Heart right ventricle (tissue), 16 donors: ENCODE measurements at regions of chr7 and their contacts with region 1.

Region 1: GRCh38 chr7:27196287-27196767 is 3.6 kb downstream of the HOXA13 start:
- DNase-seq: peak; percentile 82 to 83
- ATAC-seq: peak in 4 of 8 donors; percentile 54 to 66 (median 58)
- H3K4me3 ChIP-seq: no peak overlapping the region
- H3K27ac ChIP-seq: no peak overlapping the region
- H3K4me1 ChIP-seq: peaks cover 9 to 47% (median 32%) of the 10 kb centered on the region in 9 donors
- H3K27me3 ChIP-seq: peaks cover 55 to 98% (median 97%) of the 10 kb centered on the region in 7 donors
- CTCF ChIP-seq: peak; percentile 37 to 88 (median 83)

Region 2: DNA sequence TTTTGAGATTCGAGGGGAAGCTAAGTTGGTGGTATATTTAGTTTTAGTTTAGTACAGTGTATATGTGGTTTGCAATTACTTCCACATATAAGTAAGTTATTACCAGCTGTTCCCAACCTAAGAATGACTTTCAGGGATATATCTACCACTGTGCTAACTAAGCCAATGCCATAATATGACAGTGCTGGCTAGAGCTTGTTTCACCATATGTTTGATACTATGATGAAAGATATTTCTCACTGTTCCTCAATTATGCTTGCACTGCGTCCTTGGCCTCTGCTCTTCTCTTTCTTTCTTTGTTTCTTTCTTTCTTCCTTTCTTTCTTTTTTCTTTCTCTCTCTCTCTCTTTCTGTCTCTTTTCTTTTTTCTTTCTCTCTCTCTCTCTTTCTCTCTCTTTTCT is 218.2 kb before region 1 on chr7:
- intact Hi-C with region 1: no loop called
- DNase-seq: no peak
- ATAC-seq: no peak
- H3K4me3 ChIP-seq: no peak overlapping the region
- H3K27ac ChIP-seq: no peak overlapping the region
- H3K4me1 ChIP-seq: no peaks in the 10 kb centered on the region
- H3K27me3 ChIP-seq: peaks cover 0 to 30% (median 2%) of the 10 kb centered on the region in 7 donors
- CTCF ChIP-seq: no peak

Region 3: DNA sequence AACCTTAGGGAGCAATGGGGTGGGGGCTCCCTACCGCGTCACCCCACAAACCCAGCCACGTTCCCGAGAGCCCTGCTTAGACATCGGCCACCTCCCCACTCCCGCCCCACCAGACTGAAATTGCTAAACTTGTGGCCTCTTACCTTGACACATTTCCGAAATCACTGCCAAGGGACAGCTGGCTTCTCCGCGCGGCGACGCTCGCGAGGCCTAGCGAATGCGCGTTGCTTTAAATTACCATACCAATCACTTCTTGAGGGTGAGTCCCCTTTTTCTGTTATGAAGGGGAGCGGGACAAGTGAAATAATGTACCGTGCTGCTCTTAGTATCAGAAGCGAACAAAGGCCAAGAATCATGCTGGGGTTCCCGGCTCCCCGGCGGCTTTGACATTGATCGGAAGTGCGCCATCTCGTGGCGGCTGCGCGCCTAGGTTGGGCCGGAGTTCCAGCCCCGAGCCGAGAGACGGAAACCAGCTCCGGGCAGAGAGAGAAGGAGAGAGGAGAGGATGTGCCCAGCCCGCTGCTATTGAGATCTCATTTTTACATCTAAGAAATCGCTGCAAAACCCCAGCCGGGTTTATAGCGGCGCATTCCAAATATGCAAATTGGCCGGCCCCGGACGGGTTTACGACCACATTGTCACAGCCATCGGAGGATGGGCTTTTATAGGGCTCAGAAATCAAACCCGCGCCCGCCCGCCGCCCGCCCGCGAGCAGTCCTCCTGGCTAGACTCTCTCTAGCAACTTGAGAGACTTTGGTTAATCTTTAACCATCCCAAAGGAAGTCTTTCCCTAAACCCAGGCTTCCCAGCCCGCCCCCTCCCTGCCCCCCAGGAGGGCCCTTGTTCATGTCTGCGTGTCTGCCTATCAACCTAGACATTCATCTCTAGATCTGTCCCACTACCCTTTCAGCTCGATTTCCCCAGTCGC is 16.6 kb before region 1 on chr7:
- intact Hi-C with region 1: no loop called
- DNase-seq: peak in 1 of 2 donors; percentile 55
- ATAC-seq: peak in 4 of 8 donors; percentile 61 to 65 (median 63)
- H3K4me3 ChIP-seq: peak overlapping the region in 2 of 10 donors; percentile 5 to 8
- H3K27ac ChIP-seq: no peak overlapping the region
- H3K4me1 ChIP-seq: peaks cover 7 to 32% (median 27%) of the 10 kb centered on the region in 9 donors
- H3K27me3 ChIP-seq: peaks cover 71 to 100% (median 100%) of the 10 kb centered on the region in 7 donors
- CTCF ChIP-seq: peak; percentile 38 to 85 (median 72)

Region 4: DNA sequence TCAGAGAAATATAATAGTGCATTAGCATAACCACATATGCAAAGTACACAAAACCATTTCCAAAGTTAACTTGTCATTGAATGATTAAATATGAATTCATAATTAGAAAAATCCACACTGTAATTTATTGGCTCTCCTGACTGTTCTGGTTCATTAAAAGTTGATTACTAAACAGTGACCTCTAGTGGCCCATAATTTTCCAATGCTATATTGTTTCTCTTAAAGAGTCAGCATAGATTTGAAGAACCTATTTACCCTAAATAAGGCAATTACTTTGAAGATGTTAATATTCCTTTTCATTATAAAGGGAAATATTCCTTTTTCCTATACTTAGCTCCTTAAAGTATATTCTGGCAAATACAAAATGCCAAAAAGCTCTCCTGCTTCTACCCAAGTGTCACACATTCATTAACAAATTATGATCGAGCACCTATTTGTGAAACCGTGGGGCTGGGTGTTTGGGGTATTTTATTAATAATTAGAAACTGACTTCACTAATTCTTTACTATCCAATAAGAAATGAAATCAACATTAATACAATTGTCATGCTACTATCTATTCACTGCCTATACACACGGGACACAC is 380.1 kb after region 1 on chr7:
- intact Hi-C with region 1: loop called in 5 of 10 experiments (anchors 5 to 10 kb)
- DNase-seq: no peak
- ATAC-seq: peak in 1 of 8 donors; percentile 65
- H3K4me3 ChIP-seq: no peak overlapping the region
- H3K27ac ChIP-seq: no peak overlapping the region
- H3K4me1 ChIP-seq: no peaks in the 10 kb centered on the region
- H3K27me3 ChIP-seq: no peaks in the 10 kb centered on the region
- CTCF ChIP-seq: peak; percentile 22 to 80 (median 70)

Region 5: GRCh38 chr7:27774717-27775328 is 578.5 kb after region 1 on chr7:
- intact Hi-C with region 1: loop called in 4 of 10 experiments (anchors 10 kb)
- DNase-seq: no peak
- ATAC-seq: no peak
- H3K4me3 ChIP-seq: no peak overlapping the region
- H3K27ac ChIP-seq: no peak overlapping the region
- H3K4me1 ChIP-seq: peaks cover 0 to 27% (median 0%) of the 10 kb centered on the region in 9 donors
- H3K27me3 ChIP-seq: no peaks in the 10 kb centered on the region
- CTCF ChIP-seq: peak; percentile 9 to 72 (median 58)

Region 6: DNA sequence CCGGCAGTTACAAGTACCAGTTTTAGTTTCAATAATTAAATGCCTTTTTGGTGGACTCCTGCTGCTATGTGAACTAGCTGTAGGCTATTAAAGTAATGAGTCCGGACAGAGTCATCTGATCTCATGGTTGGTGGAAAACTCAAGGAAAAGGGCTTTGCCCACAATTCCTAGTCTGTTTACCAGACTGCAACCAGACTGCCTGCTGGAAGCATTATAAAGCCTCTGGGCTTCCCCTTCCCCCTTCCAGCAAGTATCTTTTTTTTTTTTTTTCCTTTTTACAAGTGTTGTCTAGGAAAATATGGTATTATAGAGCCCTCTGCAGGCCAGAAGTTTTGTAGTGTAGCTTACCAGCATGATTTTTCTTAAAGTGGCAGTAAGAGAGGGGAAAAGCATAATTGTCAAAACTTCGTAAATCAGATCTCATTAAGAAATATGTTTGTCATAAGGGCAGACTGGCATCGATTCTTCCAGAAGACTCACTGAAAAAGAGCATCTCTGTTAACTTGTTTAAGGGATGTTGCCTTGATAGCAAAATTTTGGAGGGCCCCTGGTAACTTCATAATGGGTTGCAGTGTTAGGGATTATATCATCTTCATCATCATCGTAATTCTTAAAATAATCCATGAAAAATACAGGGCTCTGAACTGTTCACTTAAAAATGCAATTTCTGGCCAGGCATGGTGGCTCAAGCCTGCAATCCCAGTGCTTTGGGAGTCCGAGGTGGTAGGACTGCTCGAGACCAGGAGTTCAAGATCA is 724.9 kb after region 1 on chr7:
- intact Hi-C with region 1: loop called in 9 of 10 experiments (anchors 5 to 10 kb)
- DNase-seq: peak in 1 of 2 donors; percentile 51
- ATAC-seq: peak in 7 of 8 donors; percentile 55 to 72 (median 62)
- H3K4me3 ChIP-seq: no peak overlapping the region
- H3K27ac ChIP-seq: no peak overlapping the region
- H3K4me1 ChIP-seq: peaks cover 0 to 35% (median 12%) of the 10 kb centered on the region in 9 donors
- H3K27me3 ChIP-seq: no peaks in the 10 kb centered on the region
- CTCF ChIP-seq: peak; percentile 12 to 75 (median 60)

Region 7: GRCh38 chr7:28069807-28070206 is 873.5 kb after region 1 on chr7:
- intact Hi-C with region 1: loop called in 3 of 10 experiments (anchors 5 kb)
- DNase-seq: peak; percentile 31 to 50
- ATAC-seq: peak; percentile 42 to 78 (median 72)
- H3K4me3 ChIP-seq: no peak overlapping the region
- H3K27ac ChIP-seq: peak overlapping the region in 5 of 10 donors; percentile 18 to 43 (median 30)
- H3K4me1 ChIP-seq: peaks cover 0 to 39% (median 16%) of the 10 kb centered on the region in 9 donors
- H3K27me3 ChIP-seq: no peaks in the 10 kb centered on the region
- CTCF ChIP-seq: no peak

Region 8: GRCh38 chr7:28083164-28083997 is 887.1 kb after region 1 on chr7:
- intact Hi-C with region 1: loop called in 3 of 10 experiments (anchors 5 to 10 kb)
- DNase-seq: no peak
- ATAC-seq: peak in 3 of 8 donors; percentile 42 to 72 (median 43)
- H3K4me3 ChIP-seq: no peak overlapping the region
- H3K27ac ChIP-seq: peak overlapping the region in 1 of 10 donors; percentile 84
- H3K4me1 ChIP-seq: peaks cover 0 to 90% (median 21%) of the 10 kb centered on the region in 9 donors
- H3K27me3 ChIP-seq: no peaks in the 10 kb centered on the region
- CTCF ChIP-seq: no peak